Sigmoid colon (tissue), 7 donors: ENCODE measurements at regions of chr11 and their contacts with region 1.

Region 1: GRCh38 chr11:121318848-121319834 is 26.6 kb downstream of the SC5D start:
- DNase-seq: no peak
- H3K4me3 ChIP-seq: no peak overlapping the region
- H3K27ac ChIP-seq: no peak overlapping the region
- H3K4me1 ChIP-seq: peaks cover 0 to 6% (median 0%) of the 10 kb centered on the region in 4 donors
- H3K27me3 ChIP-seq: no peaks in the 10 kb centered on the region
- CTCF ChIP-seq: peak; percentile 76 to 86 (median 82)
- EP300 ChIP-seq: no peak
- POLR2A ChIP-seq: no peak

Region 2: DNA sequence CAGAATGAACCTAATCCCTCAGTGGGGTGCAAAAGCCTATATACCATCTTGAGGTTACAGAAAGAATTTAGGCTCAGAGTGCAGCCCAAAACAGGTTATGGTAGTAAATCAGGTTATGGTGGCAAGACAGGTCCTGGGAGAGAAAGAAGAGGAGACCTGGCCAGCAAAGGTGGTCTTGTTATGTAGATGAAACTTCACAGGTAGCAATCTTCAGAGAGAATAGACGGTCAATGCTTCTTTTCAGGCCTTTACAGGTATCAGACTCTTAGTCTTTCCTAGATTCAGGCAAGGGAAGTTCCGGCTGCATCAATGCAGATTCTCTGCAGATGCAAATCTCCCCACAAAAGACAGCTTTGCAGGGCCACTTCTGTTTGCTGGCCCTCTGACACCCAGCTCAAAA is 87.2 kb after region 1 on chr11:
- intact Hi-C with region 1: no loop called
- DNase-seq: no peak
- H3K4me3 ChIP-seq: no peak overlapping the region
- H3K27ac ChIP-seq: no peak overlapping the region
- H3K4me1 ChIP-seq: no peaks in the 10 kb centered on the region
- H3K27me3 ChIP-seq: no peaks in the 10 kb centered on the region
- CTCF ChIP-seq: no peak
- EP300 ChIP-seq: no peak
- POLR2A ChIP-seq: no peak

Region 3: DNA sequence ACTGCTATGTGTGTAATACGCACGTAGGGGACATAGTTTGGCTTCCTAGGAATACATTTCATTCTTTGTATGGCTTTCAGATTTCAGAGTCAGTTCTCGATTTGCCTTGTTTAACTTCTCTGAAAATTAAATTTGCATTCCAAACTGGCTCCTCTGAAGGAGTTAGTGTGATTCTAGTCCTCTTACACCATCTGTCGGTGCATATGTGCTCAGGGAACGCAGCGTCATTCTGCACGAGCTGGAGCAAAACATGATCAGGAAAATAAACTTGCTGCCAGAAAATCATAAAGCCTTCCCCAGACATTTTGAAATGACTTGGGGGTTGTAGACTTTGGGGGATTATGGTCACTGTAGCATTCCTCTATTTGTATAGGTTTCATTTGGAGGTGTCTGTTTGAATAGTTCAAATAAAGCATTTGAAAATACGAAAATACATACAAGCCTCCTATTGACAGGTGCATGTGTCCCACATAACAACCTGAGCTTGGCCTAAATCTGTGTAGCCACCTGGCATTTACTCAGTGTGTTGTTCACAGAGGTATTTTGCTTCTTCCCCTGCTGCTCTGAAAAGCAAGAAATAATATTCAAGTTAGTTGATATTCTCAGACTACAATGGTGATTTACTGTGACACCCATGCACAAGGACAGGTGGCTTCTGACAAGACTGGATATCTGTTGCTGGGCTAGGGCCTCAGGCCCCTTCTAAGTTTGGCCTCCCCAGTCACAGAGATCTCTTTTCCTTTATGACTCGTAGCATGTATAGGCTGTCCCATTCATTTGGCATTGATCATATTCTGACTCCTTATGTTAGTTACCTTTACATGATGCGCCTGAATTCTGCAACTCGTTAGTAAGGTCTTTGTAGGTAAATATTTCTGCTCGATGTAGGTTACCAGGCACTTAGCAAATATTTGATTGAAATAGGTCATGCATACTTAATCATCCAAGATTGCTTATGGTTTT is 215.3 kb after region 1 on chr11:
- intact Hi-C with region 1: loop called (anchors 5 kb)
- DNase-seq: no peak
- H3K4me3 ChIP-seq: no peak overlapping the region
- H3K27ac ChIP-seq: no peak overlapping the region
- H3K4me1 ChIP-seq: peaks cover 0 to 5% (median 0%) of the 10 kb centered on the region in 4 donors
- H3K27me3 ChIP-seq: no peaks in the 10 kb centered on the region
- CTCF ChIP-seq: peak in 3 of 4 experiments; percentile 27 to 38 (median 31)
- EP300 ChIP-seq: no peak
- POLR2A ChIP-seq: no peak

Region 4: GRCh38 chr11:121591405-121592033 is 272.4 kb after region 1 on chr11:
- intact Hi-C with region 1: loop called (anchors 2 kb)
- DNase-seq: peak; percentile 74
- H3K4me3 ChIP-seq: no peak overlapping the region
- H3K27ac ChIP-seq: peak overlapping the region; percentile 1 to 83 (median 76)
- H3K4me1 ChIP-seq: peaks cover 0 to 32% (median 22%) of the 10 kb centered on the region in 4 donors
- H3K27me3 ChIP-seq: no peaks in the 10 kb centered on the region
- CTCF ChIP-seq: peak; percentile 64 to 90 (median 80)
- EP300 ChIP-seq: no peak
- POLR2A ChIP-seq: no peak